PC-3 (cell line): ENCODE measurements at regions of chrX and their contacts with region 1.

Region 1: DNA sequence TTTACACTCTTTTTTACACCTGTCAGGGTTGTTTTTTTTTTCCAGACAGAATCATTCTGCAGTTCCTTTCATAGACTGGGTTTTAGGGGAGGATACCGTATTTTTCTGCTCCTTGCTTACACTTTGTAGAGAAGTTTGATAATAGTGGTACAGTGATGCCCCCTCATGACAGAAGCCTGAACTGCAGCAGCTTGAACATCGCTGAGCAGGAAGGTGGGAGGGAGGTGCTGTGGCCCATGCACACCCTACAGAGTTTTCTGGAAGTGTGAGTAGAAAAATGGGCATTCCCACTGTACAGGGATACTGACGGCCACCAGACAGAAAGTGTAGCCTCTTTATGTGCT is 54.5 kb downstream of the RAB40A start:
- DNase-seq: peak; percentile 88
- ATAC-seq: peak; percentile 90
- H3K4me3 ChIP-seq: peak overlapping the region; percentile 65
- H3K27ac ChIP-seq: no peak overlapping the region
- H3K4me1 ChIP-seq: no peaks in the 10 kb centered on the region
- H3K27me3 ChIP-seq: no peaks in the 10 kb centered on the region
- CTCF ChIP-seq: peak; percentile 78

Region 2: DNA sequence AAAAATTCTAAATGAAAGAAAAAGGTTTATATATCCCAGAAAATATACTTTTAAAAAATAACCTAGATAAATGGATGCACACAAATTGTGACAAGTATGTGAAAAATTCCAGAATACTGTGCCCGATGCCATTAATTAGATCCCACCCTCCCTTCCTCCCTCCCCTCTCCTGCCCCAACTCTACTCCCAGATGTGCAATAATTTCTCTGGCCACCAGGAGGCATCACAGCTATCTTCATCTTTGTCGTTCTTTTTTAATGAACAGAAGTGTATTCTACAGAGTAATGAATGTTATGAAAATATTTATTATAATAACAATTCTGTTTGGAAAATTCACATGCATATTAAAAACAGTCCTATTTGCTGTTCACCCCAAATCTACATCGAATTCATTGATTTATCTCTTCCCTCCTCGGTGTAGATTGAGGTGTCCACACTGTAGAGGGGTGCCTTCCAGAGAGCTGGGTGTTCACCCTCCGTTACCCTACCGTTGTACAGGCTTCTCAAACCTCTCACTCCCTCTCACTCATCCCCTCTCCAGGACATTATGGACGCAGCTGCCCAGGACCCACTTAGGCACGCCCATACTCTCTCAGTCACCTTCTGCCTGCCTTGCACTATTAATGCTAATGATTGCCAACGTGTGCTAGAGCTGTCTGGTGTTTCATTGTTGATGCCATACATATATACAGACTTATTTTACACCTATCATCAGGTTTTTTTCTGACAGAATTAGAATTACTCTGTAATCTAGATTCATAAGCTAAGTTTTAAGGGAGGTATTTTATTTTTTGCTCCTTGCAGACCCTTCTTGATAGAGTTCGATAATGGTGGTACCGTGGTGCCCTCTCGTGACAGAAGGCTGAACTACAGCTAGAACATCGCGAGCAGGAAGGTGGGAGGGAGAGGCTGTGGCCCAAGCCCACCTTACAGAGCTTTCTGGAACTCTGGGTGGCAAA is 513.6 kb before region 1 on chrX:
- CTCF ChIA-PET with region 1: no interaction called
- POLR2A ChIA-PET with region 1: no interaction called
- intact Hi-C with region 1: loop called (anchors 5 kb)
- DNase-seq: peak; percentile 81
- ATAC-seq: peak; percentile 91
- H3K4me3 ChIP-seq: peak overlapping the region; percentile 54
- H3K27ac ChIP-seq: no peak overlapping the region
- H3K4me1 ChIP-seq: peaks cover 8% of the 10 kb centered on the region; the same call in 1 of the 2 replicates
- H3K27me3 ChIP-seq: no peaks in the 10 kb centered on the region
- CTCF ChIP-seq: peak; percentile 79

Region 3: GRCh38 chrX:103254921-103255493 is 209.7 kb before region 1 on chrX and contains the start of gene TCEAL8:
- CTCF ChIA-PET with region 1: no interaction called
- POLR2A ChIA-PET with region 1: no interaction called
- intact Hi-C with region 1: loop called (anchors 5 kb)
- DNase-seq: peak; percentile 66
- ATAC-seq: peak; percentile 88
- H3K4me3 ChIP-seq: peak within 1 kb of the TSS; percentile 85
- H3K27ac ChIP-seq: peak within 1 kb of the TSS; percentile 8; the same call in 1 of the 2 replicates
- H3K4me1 ChIP-seq: peaks cover 5% of the 10 kb centered on the region; the same call in 1 of the 2 replicates
- H3K27me3 ChIP-seq: 0 out of 2 replicates have a peak, but pooled peaks cover 3% of the 10 kb centered on the region
- CTCF ChIP-seq: no peak
- total RNA-seq, gene TCEAL8: 41.2 and 42.5 TPM in 2 replicates

Region 4: DNA sequence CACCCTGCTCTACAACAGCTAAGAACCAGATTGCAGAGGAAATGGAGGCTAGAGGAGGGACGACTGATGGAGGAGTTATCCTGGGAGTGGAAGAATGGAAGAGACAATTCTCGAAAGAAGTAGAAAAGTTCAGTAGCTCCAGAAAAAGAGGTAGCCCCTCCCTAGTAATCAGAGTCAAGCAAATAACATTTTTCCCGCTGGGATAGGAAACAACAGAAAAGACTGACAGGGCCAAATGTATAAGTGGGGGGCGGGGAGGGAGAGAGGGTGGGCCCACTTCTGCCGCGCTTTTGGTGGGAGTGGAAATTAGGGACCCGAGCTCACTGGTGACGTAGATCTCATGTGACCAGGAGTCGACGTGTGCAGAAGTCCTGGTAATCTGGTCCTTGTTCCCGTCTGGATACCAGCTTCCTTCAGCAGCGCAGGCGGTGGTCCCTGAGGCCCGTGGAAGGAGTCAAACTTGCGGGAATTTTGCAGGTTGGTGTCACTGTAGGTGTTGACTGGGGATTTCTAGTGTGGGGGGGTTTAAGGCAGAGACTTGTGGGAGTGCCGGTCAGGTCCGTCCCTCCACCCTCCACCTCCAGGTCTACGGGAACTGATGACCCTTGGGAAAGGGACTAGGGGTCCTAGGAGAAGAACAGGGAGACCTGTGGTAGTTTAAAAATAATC is 108.5 kb before region 1 on chrX and contains the start of gene TCEAL9:
- CTCF ChIA-PET with region 1: interaction called, 10 read pairs
- POLR2A ChIA-PET with region 1: interaction called, 3 read pairs
- intact Hi-C with region 1: loop called (anchors 5 kb)
- DNase-seq: peak; percentile 48
- ATAC-seq: peak; percentile 87
- H3K4me3 ChIP-seq: peak within 1 kb of the TSS; percentile 92
- H3K27ac ChIP-seq: 0 out of 2 replicates have a peak within 1 kb of the TSS, but pooled peaks have one; percentile 20
- H3K4me1 ChIP-seq: 0 out of 2 replicates have a peak, but pooled peaks cover 7% of the 10 kb centered on the region
- H3K27me3 ChIP-seq: no peaks in the 10 kb centered on the region
- CTCF ChIP-seq: no peak
- total RNA-seq, gene TCEAL9: 23.0 and 46.8 TPM in 2 replicates

Region 5: DNA sequence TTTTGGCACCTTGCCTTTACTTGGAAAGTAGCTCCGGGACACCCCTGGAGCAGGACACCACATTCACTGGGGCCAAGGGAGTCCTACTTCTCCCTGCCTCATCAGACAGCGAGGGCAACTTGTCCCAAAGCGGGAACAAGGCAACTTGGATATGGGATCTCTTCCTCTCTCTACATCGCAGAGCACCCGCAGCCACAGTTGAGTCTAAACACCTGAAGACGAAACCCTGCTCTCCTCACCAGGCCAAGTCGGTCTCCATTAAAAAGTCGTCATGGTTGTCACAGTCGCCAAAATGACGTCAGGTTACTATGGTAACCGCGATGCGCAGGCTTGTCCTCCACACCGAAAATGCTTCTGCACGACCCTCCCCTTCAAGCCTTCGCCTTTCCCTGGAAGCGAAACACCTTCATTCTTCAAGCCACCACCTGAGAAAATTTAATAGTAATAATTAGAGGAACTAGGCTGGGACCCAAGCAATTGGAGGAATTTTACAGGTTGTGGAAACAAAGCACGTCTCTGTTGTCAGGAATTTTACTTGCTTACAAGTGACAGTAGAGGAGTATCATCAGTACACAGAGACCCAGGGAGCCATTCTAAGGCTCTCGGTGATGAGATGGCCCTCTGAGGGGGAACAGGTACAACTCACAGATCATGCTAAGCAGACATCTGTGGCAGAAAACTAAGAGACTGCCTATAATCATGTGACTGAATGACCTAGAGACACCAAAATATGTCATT is 90.1 kb after region 1 on chrX:
- CTCF ChIA-PET with region 1: interaction called, 11 read pairs
- POLR2A ChIA-PET with region 1: no interaction called
- intact Hi-C with region 1: no loop called
- DNase-seq: no peak
- ATAC-seq: no peak
- H3K4me3 ChIP-seq: no peak overlapping the region
- H3K27ac ChIP-seq: no peak overlapping the region
- H3K4me1 ChIP-seq: peaks cover 9% of the 10 kb centered on the region; the same call in 1 of the 2 replicates
- H3K27me3 ChIP-seq: no peaks in the 10 kb centered on the region
- CTCF ChIP-seq: no peak